H1 (cell line): ENCODE measurements at regions of chr2 and their contacts with region 1.

Region 1: DNA sequence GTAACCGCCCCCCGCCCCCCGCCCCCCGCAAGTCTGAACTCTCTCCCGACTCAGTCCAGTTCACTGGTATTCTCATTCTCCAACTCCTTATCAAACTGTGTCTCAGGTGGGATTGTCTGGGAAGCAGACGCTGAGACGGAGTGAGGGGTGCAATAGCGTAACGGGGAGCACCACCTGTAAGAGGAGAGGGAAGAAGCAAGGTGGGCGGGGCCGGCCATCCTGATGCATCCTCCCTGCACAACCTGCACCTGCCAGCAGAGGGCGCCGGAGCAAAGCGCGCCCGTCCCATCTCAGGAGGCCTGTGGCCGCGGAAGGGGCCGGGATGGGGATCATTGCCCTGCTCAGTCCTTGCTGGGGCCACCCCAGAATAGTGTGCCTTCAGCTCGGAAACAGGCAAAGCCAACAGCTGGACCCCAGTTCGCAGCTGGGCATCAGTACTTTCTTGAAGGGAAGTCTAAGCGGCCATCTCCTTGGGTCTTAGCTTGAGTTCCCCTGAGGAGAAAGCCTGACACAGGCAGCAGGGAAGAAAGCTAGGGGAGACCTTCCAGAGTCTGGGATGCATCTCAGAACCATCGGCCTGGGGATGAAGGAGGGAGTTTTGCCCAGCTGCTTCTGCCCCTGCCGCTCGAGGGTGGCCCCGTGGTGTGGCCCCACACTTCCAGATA is 208.0 kb downstream of the TFCP2L1 start:
- DNase-seq: peak in 1 of 2 experiments; percentile 99
- H3K4me3 ChIP-seq: peak overlapping the region in 3 of 4 experiments; percentile 28 to 54 (median 36); a peak in 6 of 8 replicates
- H3K27ac ChIP-seq: no peak overlapping the region
- H3K4me1 ChIP-seq: peaks cover 0 to 19% (median 13%) of the 10 kb centered on the region in 4 experiments; a peak in 6 of 7 replicates
- H3K27me3 ChIP-seq: peaks cover 0 to 32% (median 20%) of the 10 kb centered on the region in 4 experiments; a peak in 6 of 7 replicates
- CTCF ChIP-seq: peak in 2 of 3 experiments; percentile 94 to 99; a peak in 3 of 4 replicates
- EP300 ChIP-seq: no peak
- POLR2A ChIP-seq: no peak
- RAD21 ChIP-seq: peak; percentile 52 to 61

Region 2: DNA sequence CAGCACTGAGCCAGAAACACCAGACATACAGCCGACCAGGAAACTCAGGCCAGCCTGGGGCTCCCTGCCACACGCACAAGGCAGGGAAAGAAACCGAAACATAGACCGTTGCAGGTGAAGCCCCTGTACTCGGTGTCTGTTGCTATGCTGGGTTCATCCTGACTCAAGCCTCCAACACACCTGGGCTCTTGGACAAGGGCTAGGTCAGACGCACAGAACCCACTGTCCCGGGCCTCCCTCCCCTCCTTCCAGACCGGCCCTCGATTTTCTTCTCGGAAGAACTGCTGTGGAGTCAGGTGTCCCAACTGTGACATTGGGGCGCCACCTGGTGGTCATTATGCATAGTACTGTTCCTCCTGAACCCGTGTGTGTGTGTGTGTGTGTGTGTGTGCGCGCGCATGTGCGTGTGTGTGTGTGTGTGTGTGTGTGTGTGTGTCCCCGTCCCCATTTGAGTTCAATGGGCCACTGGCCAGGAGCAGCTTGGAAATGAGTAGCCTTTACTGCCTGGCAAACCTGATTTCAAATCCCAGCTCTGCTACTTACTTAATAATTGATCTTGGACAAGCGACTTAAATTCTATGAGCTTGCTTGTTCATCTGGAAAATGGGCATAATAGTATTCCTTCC is 396.8 kb before region 1 on chr2:
- CTCF ChIA-PET with region 1: interaction called, 88 read pairs
- POLR2A ChIA-PET with region 1: interaction called, 13 read pairs
- DNase-seq: peak in 1 of 2 experiments; percentile 91
- H3K4me3 ChIP-seq: no peak overlapping the region
- H3K27ac ChIP-seq: no peak overlapping the region
- H3K4me1 ChIP-seq: no peaks in the 10 kb centered on the region
- H3K27me3 ChIP-seq: peaks cover 0 to 14% (median 6%) of the 10 kb centered on the region in 4 experiments; a peak in 3 of 7 replicates
- CTCF ChIP-seq: peak; percentile 78 to 79 (median 78)
- EP300 ChIP-seq: no peak
- POLR2A ChIP-seq: no peak
- RAD21 ChIP-seq: peak; percentile 86 to 91

Region 3: DNA sequence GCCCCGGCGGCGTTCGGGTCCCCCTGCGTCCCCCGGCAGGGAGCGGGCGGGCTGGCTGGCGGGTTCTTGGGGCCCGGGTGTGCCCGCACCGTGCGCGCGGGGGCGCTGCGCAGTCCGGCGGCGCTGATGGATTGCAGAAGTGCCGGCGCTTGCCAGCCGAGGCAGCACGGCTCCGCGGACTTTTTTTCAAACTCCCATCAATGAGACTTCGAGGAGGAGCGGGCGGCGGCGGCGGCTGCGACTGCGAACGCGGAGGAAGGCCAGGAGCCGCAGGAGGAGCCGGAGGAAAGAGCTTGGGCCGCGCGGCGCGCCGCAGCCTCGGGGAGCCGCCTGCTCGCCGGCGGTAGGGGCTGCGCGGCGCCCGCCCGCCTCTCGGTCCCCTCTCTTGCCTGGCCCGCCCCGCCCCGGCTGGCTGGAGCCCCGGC is 341.3 kb before region 1 on chr2 and contains the start of gene GLI2:
- CTCF ChIA-PET with region 1: interaction called, 4 read pairs
- POLR2A ChIA-PET with region 1: interaction called, 38 read pairs
- DNase-seq: peak; percentile 50 to 90
- H3K4me3 ChIP-seq: peak within 1 kb of the TSS; percentile 80 to 91 (median 89)
- H3K27ac ChIP-seq: peak within 1 kb of the TSS; percentile 79; the same call in 1 of the 2 replicates
- H3K4me1 ChIP-seq: peaks cover 12 to 24% (median 16%) of the 10 kb centered on the region in 4 experiments
- H3K27me3 ChIP-seq: no peaks in the 10 kb centered on the region; a peak in 1 of 7 replicates
- CTCF ChIP-seq: peak; percentile 66 to 98 (median 83)
- EP300 ChIP-seq: no peak
- POLR2A ChIP-seq: no peak
- RAD21 ChIP-seq: peak; percentile 60 to 78
- total RNA-seq, gene GLI2: 46.9 and 49.8 TPM in 2 replicates

Region 4: GRCh38 chr2:120958623-120959366 is 118.2 kb before region 1 on chr2:
- CTCF ChIA-PET with region 1: interaction called, 14 read pairs
- POLR2A ChIA-PET with region 1: interaction called, 11 read pairs
- DNase-seq: peak; percentile 17 to 93
- H3K4me3 ChIP-seq: no peak overlapping the region
- H3K27ac ChIP-seq: no peak overlapping the region
- H3K4me1 ChIP-seq: no peaks in the 10 kb centered on the region
- H3K27me3 ChIP-seq: no peaks in the 10 kb centered on the region
- CTCF ChIP-seq: peak in 2 of 3 experiments; percentile 79 to 83; a peak in 3 of 4 replicates
- EP300 ChIP-seq: no peak
- POLR2A ChIP-seq: no peak
- RAD21 ChIP-seq: peak; percentile 78 to 86

Region 5: GRCh38 chr2:121038891-121039616 is 38.0 kb before region 1 on chr2:
- CTCF ChIA-PET with region 1: interaction called, 4 read pairs
- POLR2A ChIA-PET with region 1: interaction called, 14 read pairs
- DNase-seq: no peak
- H3K4me3 ChIP-seq: no peak overlapping the region
- H3K27ac ChIP-seq: no peak overlapping the region
- H3K4me1 ChIP-seq: peaks cover 0 to 3% (median 0%) of the 10 kb centered on the region in 4 experiments; a peak in 1 of 7 replicates
- H3K27me3 ChIP-seq: peaks cover 0 to 4% (median 2%) of the 10 kb centered on the region in 4 experiments; a peak in 3 of 7 replicates
- CTCF ChIP-seq: no peak
- EP300 ChIP-seq: no peak
- POLR2A ChIP-seq: no peak
- RAD21 ChIP-seq: no peak

Region 6: GRCh38 chr2:121088251-121089165 is 11.5 kb after region 1 on chr2:
- CTCF ChIA-PET with region 1: interaction called, 434 read pairs
- POLR2A ChIA-PET with region 1: interaction called, 51 read pairs
- DNase-seq: no peak
- H3K4me3 ChIP-seq: no peak overlapping the region
- H3K27ac ChIP-seq: no peak overlapping the region
- H3K4me1 ChIP-seq: no peaks in the 10 kb centered on the region
- H3K27me3 ChIP-seq: no peaks in the 10 kb centered on the region; a peak in 2 of 7 replicates
- CTCF ChIP-seq: no peak
- EP300 ChIP-seq: no peak
- POLR2A ChIP-seq: no peak
- RAD21 ChIP-seq: no peak

Region 7: DNA sequence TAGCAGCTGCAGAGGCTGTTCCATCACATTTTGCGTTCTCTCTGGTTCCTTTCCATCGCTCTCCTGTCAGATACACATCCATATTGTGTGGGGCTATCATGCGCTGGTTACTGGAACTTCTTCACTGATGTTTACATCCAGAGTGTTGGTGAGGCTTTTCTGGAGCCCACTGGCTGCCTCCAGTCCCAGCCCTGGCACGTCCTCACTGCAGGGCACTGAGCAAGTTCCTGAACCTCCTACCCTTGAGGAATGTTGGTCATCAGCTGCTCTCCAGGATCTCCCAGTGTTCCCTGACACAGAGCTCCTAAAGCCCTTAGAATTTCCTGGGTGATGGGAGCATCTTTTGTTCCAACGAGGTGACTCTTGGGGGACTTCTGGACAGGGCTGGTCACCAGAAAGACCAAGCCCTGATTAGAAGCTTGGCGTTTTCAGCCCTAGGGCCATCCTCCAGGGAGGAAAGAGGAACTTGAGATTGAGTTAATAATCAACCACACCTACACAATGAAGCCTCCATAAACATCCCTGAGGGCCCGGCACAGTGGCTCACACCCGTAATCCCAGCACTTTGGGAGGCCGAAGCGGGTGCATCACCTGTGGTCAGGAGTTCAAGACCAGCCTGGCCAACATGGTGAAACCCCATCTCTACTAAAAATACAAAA is 126.7 kb after region 1 on chr2:
- CTCF ChIA-PET with region 1: no interaction called
- POLR2A ChIA-PET with region 1: no interaction called
- DNase-seq: no peak
- H3K4me3 ChIP-seq: no peak overlapping the region
- H3K27ac ChIP-seq: no peak overlapping the region
- H3K4me1 ChIP-seq: no peaks in the 10 kb centered on the region
- H3K27me3 ChIP-seq: no peaks in the 10 kb centered on the region; a peak in 1 of 7 replicates
- CTCF ChIP-seq: no peak
- EP300 ChIP-seq: no peak
- POLR2A ChIP-seq: no peak
- RAD21 ChIP-seq: no peak

Region 8: DNA sequence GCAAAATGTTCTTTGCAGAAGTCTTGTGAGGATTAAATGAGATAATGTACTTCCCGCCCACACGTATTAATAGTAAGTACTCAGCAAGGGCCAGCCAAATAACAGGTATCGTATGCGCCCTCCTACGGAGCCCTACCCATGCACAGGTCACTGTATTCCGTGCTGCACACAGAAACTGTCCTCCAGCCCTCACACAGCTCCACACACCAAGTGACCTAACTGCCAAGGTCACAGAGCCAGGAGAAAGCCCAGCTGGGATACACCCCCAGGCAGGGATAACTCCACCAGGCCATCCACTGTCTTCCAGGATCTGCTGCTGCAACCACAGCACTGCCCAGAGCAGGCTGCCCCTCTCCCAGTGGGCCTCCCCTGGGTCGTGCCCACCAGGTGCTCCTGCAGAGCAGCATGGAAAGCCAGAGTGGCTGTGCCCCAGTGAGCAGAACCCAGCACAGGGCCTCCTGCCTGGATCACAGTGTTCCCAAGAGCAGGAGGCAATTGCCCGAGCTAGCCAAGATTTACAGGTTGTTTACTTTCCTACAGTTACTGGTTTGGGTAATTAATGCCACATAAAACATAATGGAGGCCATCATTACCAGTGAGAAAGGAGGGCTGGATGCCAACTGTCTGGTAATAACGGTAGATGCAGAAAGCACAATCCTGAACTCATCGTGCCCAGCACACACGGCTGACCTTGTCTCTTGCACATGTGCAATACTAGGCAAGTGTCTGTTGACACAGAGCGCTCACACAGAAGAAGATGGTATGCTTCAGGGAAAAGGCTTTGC is 183.5 kb after region 1 on chr2:
- CTCF ChIA-PET with region 1: no interaction called
- POLR2A ChIA-PET with region 1: no interaction called
- DNase-seq: no peak
- H3K4me3 ChIP-seq: no peak overlapping the region
- H3K27ac ChIP-seq: no peak overlapping the region
- H3K4me1 ChIP-seq: peaks cover 0 to 3% (median 0%) of the 10 kb centered on the region in 4 experiments; a peak in 2 of 7 replicates
- H3K27me3 ChIP-seq: no peaks in the 10 kb centered on the region
- CTCF ChIP-seq: no peak
- EP300 ChIP-seq: no peak
- POLR2A ChIP-seq: no peak
- RAD21 ChIP-seq: no peak